Activated T-helper 2 cell treated with anti-CD3 and anti-CD28 coated beads, Interferon-gamma antibody, Interleukin-2, Interleukin-4, amounts not matched to agents 10 μg/mL and 5 μg/mL and 100 μg/mL, durations not matched to agents 14 hours and 24 hours and 36 hours (primary cell): ENCODE measurements at regions of chr4 and their contacts with region 1.

Region 1: GRCh38 chr4:142331132-142331531 is 515.0 kb downstream of the INPP4B start:
- DNase-seq: no peak
- H3K4me3 Mint-ChIP-seq: no peak overlapping the region
- H3K27ac Mint-ChIP-seq: no peak overlapping the region
- H3K4me1 Mint-ChIP-seq: peaks cover 47% of the 10 kb centered on the region
- H3K27me3 Mint-ChIP-seq: no peaks in the 10 kb centered on the region

Region 2: DNA sequence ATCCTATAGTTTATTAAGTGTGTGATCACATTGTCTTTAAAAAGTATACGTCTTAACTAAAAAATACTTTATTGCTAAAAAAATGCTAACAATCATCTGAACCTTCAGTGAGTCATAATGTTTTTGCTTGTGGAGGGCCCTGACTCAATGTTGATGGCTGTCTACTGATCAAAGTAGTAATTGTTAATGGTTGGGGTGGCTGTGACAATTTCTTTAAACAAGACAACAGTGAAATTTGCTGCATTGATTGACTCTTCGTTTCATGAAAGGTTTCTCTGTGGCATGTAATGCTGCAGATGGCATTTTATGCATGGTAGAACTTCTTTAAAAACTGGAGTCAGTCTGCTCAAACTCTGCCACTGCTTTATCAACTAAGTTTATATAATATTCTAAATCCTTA is 796.1 kb before region 1 on chr4:
- intact Hi-C with region 1: no loop called
- DNase-seq: no peak
- H3K4me3 Mint-ChIP-seq: no peak overlapping the region
- H3K27ac Mint-ChIP-seq: no peak overlapping the region
- H3K4me1 Mint-ChIP-seq: no peaks in the 10 kb centered on the region
- H3K27me3 Mint-ChIP-seq: no peaks in the 10 kb centered on the region

Region 3: DNA sequence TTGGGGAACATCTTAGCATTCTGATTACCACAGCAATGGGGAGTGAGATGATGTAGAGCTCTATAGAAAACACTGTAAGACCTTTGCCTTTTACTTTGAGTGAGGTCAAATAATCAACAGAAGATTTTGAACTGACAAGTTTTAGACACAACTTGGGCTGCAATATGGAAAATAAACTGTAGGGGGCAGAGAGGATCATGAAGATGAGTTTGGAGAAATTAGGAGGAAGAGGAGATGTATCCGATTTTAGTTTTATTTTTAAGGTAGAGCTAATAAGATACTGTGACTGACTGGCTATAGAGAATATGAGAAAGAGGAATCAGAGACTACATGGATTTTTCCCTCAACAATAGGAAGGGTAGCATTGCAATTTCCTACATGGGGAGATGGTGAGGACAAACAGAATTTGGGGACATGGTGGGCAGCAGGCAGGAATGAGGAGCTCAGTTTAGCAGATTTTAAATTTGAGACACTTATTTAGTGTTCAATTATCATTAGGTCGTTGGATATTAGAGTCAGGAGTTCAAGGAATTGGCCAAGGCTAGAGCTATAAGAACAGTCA is 48.2 kb before region 1 on chr4:
- intact Hi-C with region 1: loop called (anchors 5 kb)
- DNase-seq: no peak
- H3K4me3 Mint-ChIP-seq: no peak overlapping the region
- H3K27ac Mint-ChIP-seq: no peak overlapping the region
- H3K4me1 Mint-ChIP-seq: peaks cover 15% of the 10 kb centered on the region
- H3K27me3 Mint-ChIP-seq: no peaks in the 10 kb centered on the region

Region 4: DNA sequence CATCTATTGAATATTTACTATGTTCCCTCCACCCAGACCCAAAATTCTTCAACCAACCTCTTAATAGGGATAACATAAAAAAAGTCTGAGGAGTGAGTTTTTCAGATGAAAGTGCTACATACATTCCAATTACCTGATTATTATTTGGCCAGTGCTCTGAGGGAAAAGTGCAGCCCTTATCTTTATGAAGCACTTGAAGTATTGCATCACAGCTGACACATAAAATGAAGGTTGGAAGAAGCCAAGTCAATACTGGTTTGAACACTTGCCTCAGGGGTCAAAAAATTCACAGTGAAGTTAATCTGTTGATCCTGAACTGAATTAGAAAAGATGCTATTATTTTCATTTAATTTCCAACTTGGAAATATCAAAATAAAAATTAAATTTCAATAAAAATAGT is 16.1 kb after region 1 on chr4:
- intact Hi-C with region 1: loop called (anchors 2 kb)
- DNase-seq: no peak
- H3K4me3 Mint-ChIP-seq: peak overlapping the region; percentile 31
- H3K27ac Mint-ChIP-seq: peak overlapping the region; percentile 1
- H3K4me1 Mint-ChIP-seq: peaks cover 63% of the 10 kb centered on the region
- H3K27me3 Mint-ChIP-seq: no peaks in the 10 kb centered on the region